ENCODE measurements at regions of chr11 and their contacts with region 1.

Region 1: DNA sequence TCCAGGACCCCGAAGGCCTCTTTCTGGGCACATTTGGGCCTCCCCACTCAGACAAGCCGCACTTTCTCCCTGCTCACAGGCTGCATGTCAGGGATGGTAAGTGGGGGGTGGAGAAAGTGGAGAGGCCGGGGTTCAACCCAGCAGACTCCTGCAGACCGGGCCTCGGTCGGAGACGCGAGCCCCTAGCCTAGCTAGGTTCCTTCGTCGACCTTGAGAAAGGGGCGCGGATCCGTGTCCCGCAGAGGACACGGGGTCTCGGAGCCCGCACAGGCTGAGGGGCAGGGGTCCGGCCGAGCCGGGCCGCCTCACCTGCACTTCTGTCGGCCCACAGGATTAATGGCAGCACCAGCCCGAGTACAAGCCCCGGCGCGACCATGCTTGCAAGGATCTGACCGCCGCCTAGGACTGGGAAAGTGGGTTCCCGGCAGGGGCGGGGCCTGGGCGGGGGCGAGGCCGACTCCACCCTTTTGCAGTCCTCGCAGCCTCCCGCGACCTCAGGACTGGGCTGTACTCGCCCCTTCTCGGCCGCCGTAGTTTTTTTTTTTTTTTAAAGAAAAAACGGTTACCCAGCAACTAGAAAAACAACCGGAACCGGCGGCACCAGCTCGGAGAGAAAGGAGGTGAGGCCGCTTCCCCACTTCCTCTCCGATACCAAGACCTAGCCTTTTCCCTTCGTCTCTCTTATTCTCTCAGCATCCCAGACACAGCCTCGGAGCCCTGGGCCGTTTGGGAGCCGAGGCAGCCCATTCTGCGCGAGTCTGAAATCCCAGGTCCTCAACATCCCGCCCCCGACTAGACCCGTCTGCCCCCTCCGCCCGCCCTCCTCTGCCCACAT is at the starts of genes SIAE and SPA17:
- DNase-seq: peak; percentile 75 to 90 (median 86)
- H3K4me3 ChIP-seq: peak within 1 kb of the TSS; percentile 74
- H3K4me3 Mint-ChIP-seq: peak within 1 kb of the TSS; percentile 89 to 95 (median 91)
- H3K27ac ChIP-seq: peak within 1 kb of the TSS; percentile 71
- H3K27ac Mint-ChIP-seq: peak within 1 kb of the TSS in 7 of 8 donors; percentile 97 to 99 (median 98)
- H3K4me1 ChIP-seq: peaks cover 36% of the 10 kb centered on the region
- H3K4me1 Mint-ChIP-seq: peaks cover 25 to 36% (median 33%) of the 10 kb centered on the region in 3 donors
- H3K27me3 ChIP-seq: no peaks in the 10 kb centered on the region
- H3K27me3 Mint-ChIP-seq: peaks cover 9 to 17% of the 10 kb centered on the region in 2 donors
- total RNA-seq, gene SIAE: 4.0 to 5.2 TPM
- total RNA-seq, gene SPA17: 2.2 to 3.9 TPM

Region 2: DNA sequence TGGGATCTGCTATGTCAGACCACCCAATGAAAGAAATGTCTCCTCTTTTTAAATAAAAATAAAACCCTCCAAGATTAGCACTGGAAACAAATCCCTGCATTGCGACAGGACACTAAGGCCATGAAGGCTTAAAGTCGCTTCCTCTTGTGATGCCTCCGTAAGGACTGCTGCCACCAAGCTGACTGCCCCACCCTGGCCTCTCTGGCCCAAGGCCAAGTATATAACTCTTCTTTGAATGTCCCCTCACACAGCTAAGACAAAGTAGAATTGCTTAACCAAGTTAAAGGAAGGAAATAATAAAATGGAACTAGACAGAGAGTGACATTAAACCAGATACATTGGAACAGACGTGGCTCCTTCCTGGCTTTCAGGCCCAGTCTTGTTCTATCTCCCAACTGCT is 58.7 kb after region 1 on chr11:
- CTCF ChIA-PET with region 1: no interaction called
- POLR2A ChIA-PET with region 1: no interaction called
- DNase-seq: no peak
- H3K4me3 ChIP-seq: no peak overlapping the region
- H3K4me3 Mint-ChIP-seq: no peak overlapping the region
- H3K27ac ChIP-seq: no peak overlapping the region
- H3K27ac Mint-ChIP-seq: no peak overlapping the region
- H3K4me1 ChIP-seq: no peaks in the 10 kb centered on the region
- H3K4me1 Mint-ChIP-seq: no peaks in the 10 kb centered on the region
- H3K27me3 ChIP-seq: no peaks in the 10 kb centered on the region
- H3K27me3 Mint-ChIP-seq: peaks cover 6 to 7% of the 10 kb centered on the region in 2 donors

Region 3: DNA sequence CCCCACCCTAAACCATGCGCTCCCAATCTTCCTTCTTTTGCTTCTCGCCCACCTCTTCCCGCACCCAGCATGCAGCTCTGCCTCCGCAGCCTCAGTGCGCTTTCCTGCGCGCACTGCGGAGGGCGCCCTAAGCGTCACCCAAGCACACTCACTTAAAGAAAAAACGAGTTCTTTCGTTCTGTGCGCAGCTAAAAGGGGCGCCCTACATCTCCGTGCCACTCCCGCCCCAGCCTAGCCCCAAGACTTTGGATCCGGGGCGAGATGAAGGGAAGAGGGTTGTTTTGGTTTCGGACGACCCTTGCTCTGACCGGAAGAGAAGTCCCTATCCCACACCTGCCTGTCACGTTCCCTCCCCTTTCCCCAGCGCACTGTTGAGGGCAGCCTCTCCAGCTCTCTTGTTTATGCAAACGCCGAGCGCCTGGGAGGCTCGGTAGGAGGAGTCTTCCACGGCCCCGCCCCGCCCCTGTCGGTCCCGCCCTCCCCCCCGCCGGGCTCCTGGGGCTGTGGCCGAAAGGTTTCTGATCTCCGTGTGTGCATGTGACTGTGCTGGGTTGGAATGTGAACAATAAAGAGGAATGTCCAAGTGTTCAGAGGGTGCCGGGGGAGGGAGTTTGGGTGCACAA is 73.2 kb after region 1 on chr11:
- CTCF ChIA-PET with region 1: interaction called, 32 read pairs
- POLR2A ChIA-PET with region 1: interaction called, 23 read pairs
- DNase-seq: peak; percentile 71 to 86 (median 81)
- H3K4me3 ChIP-seq: peak overlapping the region; percentile 97
- H3K4me3 Mint-ChIP-seq: peak overlapping the region; percentile 90 to 97 (median 95)
- H3K27ac ChIP-seq: peak overlapping the region; percentile 76
- H3K27ac Mint-ChIP-seq: peak overlapping the region; percentile 46 to 93 (median 90)
- H3K4me1 ChIP-seq: peaks cover 9% of the 10 kb centered on the region
- H3K4me1 Mint-ChIP-seq: peaks cover 4 to 14% (median 7%) of the 10 kb centered on the region in 3 donors
- H3K27me3 ChIP-seq: no peaks in the 10 kb centered on the region
- H3K27me3 Mint-ChIP-seq: peaks cover 8 to 14% of the 10 kb centered on the region in 2 donors

Region 4: DNA sequence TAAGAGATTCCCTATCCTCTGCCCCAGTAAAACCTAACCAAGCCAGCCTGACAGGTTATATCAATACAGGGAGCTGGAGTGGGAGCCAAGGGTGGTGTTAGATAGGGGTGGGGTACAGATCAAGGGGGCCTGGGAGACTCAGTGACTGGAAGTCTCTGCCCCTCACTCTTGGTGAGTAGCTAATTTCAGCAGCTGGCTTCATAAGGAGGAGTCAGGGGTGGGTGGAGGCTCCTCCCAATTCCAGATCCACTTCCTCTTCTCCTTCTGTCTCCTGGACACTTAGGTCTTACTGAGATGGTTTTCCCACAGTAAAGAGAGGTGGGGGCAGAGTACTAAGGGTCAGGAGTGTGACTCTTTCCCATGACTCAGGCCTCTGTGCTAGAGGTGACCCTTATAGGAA is 79.7 kb after region 1 on chr11:
- CTCF ChIA-PET with region 1: interaction called, 32 read pairs
- POLR2A ChIA-PET with region 1: interaction called, 4 read pairs
- DNase-seq: no peak
- H3K4me3 ChIP-seq: no peak overlapping the region
- H3K4me3 Mint-ChIP-seq: no peak overlapping the region
- H3K27ac ChIP-seq: no peak overlapping the region
- H3K27ac Mint-ChIP-seq: no peak overlapping the region
- H3K4me1 ChIP-seq: peaks cover 2% of the 10 kb centered on the region
- H3K4me1 Mint-ChIP-seq: peaks cover under 1 to 2% (median 1%) of the 10 kb centered on the region in 3 donors
- H3K27me3 ChIP-seq: peaks cover 7% of the 10 kb centered on the region
- H3K27me3 Mint-ChIP-seq: peaks cover 29% of the 10 kb centered on the region in 2 donors

Region 5: DNA sequence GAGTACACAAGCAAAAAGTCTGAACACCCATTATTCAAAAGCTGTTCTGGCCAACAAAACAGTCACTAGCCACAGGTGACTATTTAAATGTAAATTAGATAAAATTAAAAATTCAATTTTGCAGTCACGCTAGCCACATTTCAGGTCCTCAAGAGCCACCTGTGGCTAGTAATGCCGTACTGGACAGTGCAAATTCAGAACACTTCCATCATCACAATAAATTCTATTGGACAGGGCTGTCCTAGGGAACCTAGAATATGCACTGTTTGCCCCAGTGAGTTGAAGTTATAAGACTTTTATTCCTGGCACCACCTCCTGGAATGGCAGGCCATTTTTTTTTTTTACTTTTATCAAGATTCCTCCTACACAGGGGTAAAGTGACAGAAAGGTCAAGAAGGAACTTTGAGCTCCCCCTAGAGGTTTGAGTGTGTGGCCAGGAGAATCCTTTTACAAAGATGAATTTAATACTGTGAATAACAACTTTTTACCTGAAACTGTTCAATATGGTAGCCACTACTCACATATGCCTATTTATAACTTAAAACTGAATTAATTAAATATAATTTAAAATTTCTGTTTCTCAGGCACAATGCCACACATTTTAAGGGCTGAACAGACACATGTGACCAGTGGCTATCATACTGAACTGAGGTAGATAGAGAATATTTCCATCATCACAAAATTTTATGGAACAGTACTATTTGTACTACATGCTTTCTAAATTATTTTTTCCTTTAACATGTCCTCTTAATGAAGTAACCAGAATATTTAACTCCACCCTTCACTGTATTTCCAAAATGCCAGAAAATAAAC is 120.1 kb after region 1 on chr11:
- CTCF ChIA-PET with region 1: interaction called, 24 read pairs
- POLR2A ChIA-PET with region 1: no interaction called
- DNase-seq: peak in 2 of 5 donors; percentile 17 to 33
- H3K4me3 ChIP-seq: no peak overlapping the region
- H3K4me3 Mint-ChIP-seq: no peak overlapping the region
- H3K27ac ChIP-seq: no peak overlapping the region
- H3K27ac Mint-ChIP-seq: no peak overlapping the region
- H3K4me1 ChIP-seq: peaks cover 13% of the 10 kb centered on the region
- H3K4me1 Mint-ChIP-seq: peaks cover 32 to 62% (median 45%) of the 10 kb centered on the region in 3 donors
- H3K27me3 ChIP-seq: no peaks in the 10 kb centered on the region
- H3K27me3 Mint-ChIP-seq: no peaks in the 10 kb centered on the region

Region 6: GRCh38 chr11:124837491-124837856 is 163.9 kb after region 1 on chr11:
- CTCF ChIA-PET with region 1: interaction called, 105 read pairs
- POLR2A ChIA-PET with region 1: interaction called, 4 read pairs
- DNase-seq: no peak
- H3K4me3 ChIP-seq: no peak overlapping the region
- H3K4me3 Mint-ChIP-seq: peak overlapping the region in 1 of 7 donors; percentile 58
- H3K27ac ChIP-seq: no peak overlapping the region
- H3K27ac Mint-ChIP-seq: no peak overlapping the region
- H3K4me1 ChIP-seq: no peaks in the 10 kb centered on the region
- H3K4me1 Mint-ChIP-seq: peaks cover 13 to 20% (median 16%) of the 10 kb centered on the region in 3 donors
- H3K27me3 ChIP-seq: peaks cover 47% of the 10 kb centered on the region
- H3K27me3 Mint-ChIP-seq: peaks cover 58 to 69% of the 10 kb centered on the region in 2 donors

Region 7: GRCh38 chr11:124875943-124876817 is 202.6 kb after region 1 on chr11:
- CTCF ChIA-PET with region 1: interaction called, 10 read pairs
- POLR2A ChIA-PET with region 1: no interaction called
- DNase-seq: peak; percentile 62 to 84 (median 75)
- H3K4me3 ChIP-seq: peak overlapping the region; percentile 84
- H3K4me3 Mint-ChIP-seq: peak overlapping the region; percentile 87 to 97 (median 92)
- H3K27ac ChIP-seq: peak overlapping the region; percentile 59
- H3K27ac Mint-ChIP-seq: peak overlapping the region; percentile 68 to 98 (median 92)
- H3K4me1 ChIP-seq: peaks cover 16% of the 10 kb centered on the region
- H3K4me1 Mint-ChIP-seq: peaks cover 14 to 26% (median 21%) of the 10 kb centered on the region in 3 donors
- H3K27me3 ChIP-seq: peaks cover 3% of the 10 kb centered on the region
- H3K27me3 Mint-ChIP-seq: peaks cover 27 to 41% of the 10 kb centered on the region in 2 donors

Measured in CD8-positive, alpha-beta memory T cell (primary cell).